ENCODE measurements at regions of chr18 and their contacts with region 1.

Region 1: GRCh38 chr18:74896390-74896991 is 298.8 kb downstream of the ZNF407 start:
- DNase-seq: peak; percentile 54 to 62 (median 60)
- ATAC-seq: peak; percentile 74
- H3K4me3 ChIP-seq: no peak overlapping the region
- H3K27ac ChIP-seq: no peak overlapping the region
- H3K4me1 ChIP-seq: no peaks in the 10 kb centered on the region
- H3K27me3 ChIP-seq: no peaks in the 10 kb centered on the region
- CTCF ChIP-seq: peak; percentile 32 to 76 (median 74)
- POLR2A ChIP-seq: no peak

Region 2: DNA sequence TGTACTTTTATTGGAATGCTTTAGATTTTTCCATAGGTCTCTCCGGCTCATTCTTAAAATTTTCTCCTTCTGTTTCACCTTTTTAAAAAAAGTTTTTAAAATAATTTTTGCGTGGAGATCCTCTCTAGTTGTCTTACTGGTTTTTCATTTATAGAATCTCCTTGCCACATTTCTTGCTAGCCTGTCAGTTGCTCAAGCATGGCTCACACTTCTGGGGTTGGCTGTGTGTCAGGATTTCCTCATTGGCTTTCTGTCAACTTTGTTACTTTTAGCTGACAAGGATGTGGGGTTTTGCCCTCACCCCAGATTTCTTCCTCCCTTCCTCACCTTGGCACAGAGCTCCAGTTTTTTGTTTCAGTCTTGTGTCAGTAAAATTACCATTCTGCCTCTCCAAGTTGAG is 174.3 kb before region 1 on chr18:
- intact Hi-C with region 1: no loop called
- DNase-seq: no peak
- ATAC-seq: no peak
- H3K4me3 ChIP-seq: no peak overlapping the region
- H3K27ac ChIP-seq: no peak overlapping the region
- H3K4me1 ChIP-seq: peaks cover under 1% of the 10 kb centered on the region
- H3K27me3 ChIP-seq: no peaks in the 10 kb centered on the region
- CTCF ChIP-seq: no peak
- POLR2A ChIP-seq: no peak

Region 3: GRCh38 chr18:75478996-75479880 is 582.7 kb after region 1 on chr18:
- intact Hi-C with region 1: loop called (anchors 10 kb)
- DNase-seq: peak in 1 of 4 donors; percentile 33
- ATAC-seq: peak; percentile 67
- H3K4me3 ChIP-seq: no peak overlapping the region
- H3K27ac ChIP-seq: no peak overlapping the region
- H3K4me1 ChIP-seq: no peaks in the 10 kb centered on the region
- H3K27me3 ChIP-seq: no peaks in the 10 kb centered on the region
- CTCF ChIP-seq: peak; percentile 27 to 74 (median 65)
- POLR2A ChIP-seq: no peak

Measured in body of pancreas (tissue), 4 donors.